BJ (cell line): ENCODE measurements at regions of chr1 and their contacts with region 1.

Region 1: DNA sequence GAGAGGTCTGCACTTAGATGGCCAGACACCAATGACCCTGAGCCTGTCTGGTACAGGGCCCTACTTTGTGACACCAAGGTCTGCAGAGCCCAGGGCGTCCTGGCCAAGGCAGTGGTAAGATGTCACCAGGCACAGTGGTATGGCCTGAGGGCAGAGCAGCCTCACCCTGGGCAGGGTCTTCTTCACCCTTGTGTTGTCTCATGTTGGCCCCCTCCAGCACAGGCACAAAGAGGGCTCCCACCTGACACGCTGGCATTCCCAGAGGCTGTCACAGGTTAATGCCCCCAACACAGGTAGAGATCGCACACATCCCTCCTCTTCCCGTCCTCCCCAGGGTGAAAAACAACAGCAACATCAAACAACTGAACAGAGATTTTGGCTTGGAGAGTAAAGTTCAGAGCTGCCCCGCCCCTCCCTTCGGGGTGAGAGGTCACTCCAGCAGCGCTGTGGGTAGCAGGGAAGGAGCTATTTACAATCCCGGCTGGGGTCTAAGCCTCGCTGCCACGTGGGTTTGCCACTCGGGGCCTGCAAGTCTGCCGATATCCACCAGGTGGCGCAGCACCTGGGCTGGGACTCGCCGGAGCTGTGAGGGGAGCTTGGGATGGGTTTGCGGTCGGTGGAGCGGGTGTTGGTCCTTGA is 12.6 kb downstream of the EFNA3 start:
- DNase-seq: no peak
- H3K4me3 ChIP-seq: no peak overlapping the region
- H3K27me3 ChIP-seq: peaks cover 4% of the 10 kb centered on the region
- CTCF ChIP-seq: peak; percentile 98

Region 2: GRCh38 chr1:155105604-155106022 is 14.4 kb after region 1 on chr1:
- CTCF ChIA-PET with region 1: interaction called, 19 read pairs
- POLR2A ChIA-PET with region 1: no interaction called
- DNase-seq: no peak
- H3K4me3 ChIP-seq: no peak overlapping the region
- H3K27me3 ChIP-seq: peaks cover 9% of the 10 kb centered on the region
- CTCF ChIP-seq: no peak

Region 3: DNA sequence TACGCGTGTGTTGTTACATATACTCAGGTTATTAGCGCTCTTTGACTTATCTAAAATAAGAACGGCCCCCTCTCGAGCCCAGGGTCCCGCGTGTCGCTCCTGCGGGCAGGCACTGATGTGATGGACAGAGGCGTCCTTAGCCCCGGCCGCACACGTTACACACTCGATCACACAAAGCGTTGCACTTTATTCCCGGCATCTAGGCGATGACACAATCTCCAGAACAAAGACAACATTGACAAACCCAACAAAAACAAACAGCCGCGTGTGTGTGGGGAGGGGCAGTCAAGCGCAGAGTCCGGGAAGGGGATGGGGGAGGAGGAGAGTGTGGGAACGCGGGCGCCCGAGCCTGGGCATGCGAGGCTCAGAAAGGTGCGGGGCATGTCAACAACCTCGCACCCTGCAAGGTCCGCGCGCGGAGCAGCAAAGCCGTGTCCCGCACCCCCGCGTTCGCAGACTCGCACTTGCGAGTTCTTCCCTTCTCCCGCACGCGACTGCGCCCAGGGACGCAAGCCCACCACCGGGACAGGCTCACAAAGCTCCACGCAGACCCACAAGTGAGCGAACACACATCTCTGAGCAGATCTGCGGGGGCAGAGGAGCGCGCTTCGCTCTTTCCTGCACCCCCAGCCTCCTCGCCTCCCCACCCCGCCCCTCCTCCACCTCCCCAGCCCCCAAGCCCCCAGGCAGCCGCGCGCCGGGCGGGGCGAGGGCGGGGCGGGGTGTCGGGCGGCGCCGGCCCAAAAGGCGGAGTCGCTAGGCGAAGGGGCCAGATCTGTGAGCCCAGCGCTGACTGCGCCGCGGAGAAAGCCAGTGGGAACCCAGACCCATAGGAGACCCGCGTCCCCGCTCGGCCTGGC is 36.1 kb after region 1 on chr1 and contains the start of gene EFNA1:
- CTCF ChIA-PET with region 1: interaction called, 22 read pairs
- POLR2A ChIA-PET with region 1: no interaction called
- DNase-seq: no peak
- H3K4me3 ChIP-seq: peak within 1 kb of the TSS; percentile 40
- H3K27me3 ChIP-seq: peaks cover 44% of the 10 kb centered on the region
- CTCF ChIP-seq: no peak
- polyA plus RNA-seq, gene EFNA1: 1.1 and 1.6 TPM in 2 replicates

Region 4: DNA sequence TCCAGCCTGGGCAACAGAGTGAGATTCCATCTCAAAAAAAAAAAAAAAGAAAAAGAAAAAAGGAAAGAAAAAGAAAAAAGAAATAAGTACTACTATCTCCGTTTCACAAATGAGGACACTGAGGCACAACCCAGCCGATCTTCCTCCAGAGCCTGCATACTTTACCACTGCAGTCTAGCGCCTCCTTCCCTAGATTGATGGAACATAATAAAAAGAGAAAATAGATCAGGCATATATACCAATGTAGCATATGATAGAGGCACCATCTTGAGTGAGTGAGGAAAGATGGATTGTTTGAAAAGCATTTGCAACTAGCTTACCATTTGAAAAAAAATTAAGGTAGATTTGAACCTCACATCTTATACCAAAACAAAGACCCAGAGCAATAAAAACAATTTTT is 54.3 kb after region 1 on chr1:
- CTCF ChIA-PET with region 1: interaction called, 16 read pairs
- POLR2A ChIA-PET with region 1: no interaction called
- DNase-seq: no peak
- H3K4me3 ChIP-seq: no peak overlapping the region
- H3K27me3 ChIP-seq: peaks cover 1% of the 10 kb centered on the region; the same call in 1 of the 2 replicates
- CTCF ChIP-seq: no peak

Region 5: GRCh38 chr1:155172732-155173477 is 81.7 kb after region 1 on chr1 and contains the start of gene KRTCAP2:
- CTCF ChIA-PET with region 1: interaction called, 259 read pairs
- POLR2A ChIA-PET with region 1: no interaction called
- DNase-seq: peak; percentile 73
- H3K4me3 ChIP-seq: peak within 1 kb of the TSS; percentile 97
- H3K27me3 ChIP-seq: no peaks in the 10 kb centered on the region
- CTCF ChIP-seq: peak; percentile 98
- polyA plus RNA-seq, gene KRTCAP2: 211 and 225 TPM in 2 replicates